ENCODE measurements at regions of chr1 and their contacts with region 1.

Region 1: DNA sequence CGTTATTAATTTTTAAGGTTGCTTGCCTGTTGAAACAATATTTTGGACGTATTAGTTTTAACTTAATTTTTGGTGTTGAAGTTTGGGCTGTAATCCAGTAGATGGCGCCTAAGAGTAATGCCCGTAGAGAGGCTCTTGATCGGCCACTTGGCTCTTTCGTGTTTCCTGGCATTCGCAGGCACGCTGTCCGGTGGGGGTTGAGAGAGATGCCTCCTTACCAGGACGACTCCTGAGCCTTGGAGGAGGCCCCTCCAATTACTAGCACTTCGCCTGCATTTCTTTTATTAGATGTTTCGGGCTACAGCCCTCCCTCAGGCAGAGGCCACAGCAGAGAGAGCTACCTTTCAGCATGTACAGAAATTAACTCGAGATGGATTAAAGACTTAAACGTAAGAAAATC is 12.0 kb downstream of the OR2M4 start:
- DNase-seq: no peak
- ATAC-seq: no peak
- H3K4me3 Mint-ChIP-seq: no peak overlapping the region
- H3K27ac Mint-ChIP-seq: no peak overlapping the region
- H3K4me1 Mint-ChIP-seq: peaks cover 2% of the 10 kb centered on the region
- H3K27me3 Mint-ChIP-seq: peaks cover 12% of the 10 kb centered on the region
- CTCF ChIP-seq: no peak

Region 2: GRCh38 chr1:248045209-248045608 is 198.0 kb before region 1 on chr1:
- CTCF ChIA-PET with region 1: no interaction called
- POLR2A ChIA-PET with region 1: no interaction called
- intact Hi-C with region 1: no loop called
- DNase-seq: no peak
- ATAC-seq: no peak
- H3K4me3 Mint-ChIP-seq: no peak overlapping the region
- H3K27ac Mint-ChIP-seq: no peak overlapping the region
- H3K4me1 Mint-ChIP-seq: no peaks in the 10 kb centered on the region
- H3K27me3 Mint-ChIP-seq: no peaks in the 10 kb centered on the region
- CTCF ChIP-seq: no peak

Region 3: GRCh38 chr1:248215880-248216279 is 27.3 kb before region 1 on chr1:
- CTCF ChIA-PET with region 1: no interaction called
- POLR2A ChIA-PET with region 1: no interaction called
- intact Hi-C with region 1: no loop called
- DNase-seq: no peak
- ATAC-seq: no peak
- H3K4me3 Mint-ChIP-seq: no peak overlapping the region
- H3K27ac Mint-ChIP-seq: no peak overlapping the region
- H3K4me1 Mint-ChIP-seq: no peaks in the 10 kb centered on the region
- H3K27me3 Mint-ChIP-seq: no peaks in the 10 kb centered on the region
- CTCF ChIP-seq: no peak

Region 4: DNA sequence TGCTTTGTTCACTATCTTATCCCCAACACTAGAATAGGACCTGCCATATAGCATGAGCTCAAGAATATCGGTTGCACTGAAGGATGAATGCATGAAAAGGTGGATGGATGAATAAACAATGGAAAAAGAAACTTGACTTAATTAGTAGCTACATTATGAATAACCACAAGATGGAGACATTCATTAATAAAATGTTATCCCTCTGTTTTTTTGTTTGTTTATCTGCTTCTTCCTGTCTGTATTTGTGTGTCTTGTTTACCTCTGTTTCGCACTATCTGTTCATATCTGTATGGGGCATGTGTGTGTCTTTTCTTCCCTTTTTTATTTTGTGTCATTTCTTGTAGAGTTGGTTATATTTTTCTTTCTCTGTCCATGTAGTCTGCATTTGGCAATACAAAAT is 460.5 kb after region 1 on chr1:
- CTCF ChIA-PET with region 1: no interaction called
- POLR2A ChIA-PET with region 1: no interaction called
- intact Hi-C with region 1: loop called (anchors 5 kb)
- DNase-seq: no peak
- ATAC-seq: no peak
- H3K4me3 Mint-ChIP-seq: no peak overlapping the region
- H3K27ac Mint-ChIP-seq: no peak overlapping the region
- H3K4me1 Mint-ChIP-seq: peaks cover 4% of the 10 kb centered on the region
- H3K27me3 Mint-ChIP-seq: no peaks in the 10 kb centered on the region
- CTCF ChIP-seq: no peak

Measured in activated B cell treated with CpG ODN at 0.5 μM for 24 hours (primary cell).